Mammary epithelial cell (primary cell): ENCODE measurements at regions of chr1 and their contacts with region 1.

Region 1: GRCh38 chr1:54047384-54048305 is 5.4 kb downstream of the TMEM59 start:
- DNase-seq: no peak
- H3K4me3 ChIP-seq: no peak overlapping the region
- H3K27ac ChIP-seq: no peak overlapping the region
- H3K4me1 ChIP-seq: no peaks in the 10 kb centered on the region
- H3K27me3 ChIP-seq: no peaks in the 10 kb centered on the region
- CTCF ChIP-seq: no peak

Region 2: GRCh38 chr1:54342742-54343687 is 295.4 kb after region 1 on chr1:
- CTCF ChIA-PET with region 1: interaction called, 10 read pairs
- dilution Hi-C with region 1: no loop called
- in situ Hi-C with region 1: no loop called
- intact Hi-C with region 1: no loop called
- DNase-seq: no peak
- H3K4me3 ChIP-seq: no peak overlapping the region
- H3K27ac ChIP-seq: no peak overlapping the region
- H3K4me1 ChIP-seq: no peaks in the 10 kb centered on the region
- H3K27me3 ChIP-seq: no peaks in the 10 kb centered on the region
- CTCF ChIP-seq: no peak